B cell (primary cell): ENCODE measurements at regions of chr14 and their contacts with region 1.

Region 1: DNA sequence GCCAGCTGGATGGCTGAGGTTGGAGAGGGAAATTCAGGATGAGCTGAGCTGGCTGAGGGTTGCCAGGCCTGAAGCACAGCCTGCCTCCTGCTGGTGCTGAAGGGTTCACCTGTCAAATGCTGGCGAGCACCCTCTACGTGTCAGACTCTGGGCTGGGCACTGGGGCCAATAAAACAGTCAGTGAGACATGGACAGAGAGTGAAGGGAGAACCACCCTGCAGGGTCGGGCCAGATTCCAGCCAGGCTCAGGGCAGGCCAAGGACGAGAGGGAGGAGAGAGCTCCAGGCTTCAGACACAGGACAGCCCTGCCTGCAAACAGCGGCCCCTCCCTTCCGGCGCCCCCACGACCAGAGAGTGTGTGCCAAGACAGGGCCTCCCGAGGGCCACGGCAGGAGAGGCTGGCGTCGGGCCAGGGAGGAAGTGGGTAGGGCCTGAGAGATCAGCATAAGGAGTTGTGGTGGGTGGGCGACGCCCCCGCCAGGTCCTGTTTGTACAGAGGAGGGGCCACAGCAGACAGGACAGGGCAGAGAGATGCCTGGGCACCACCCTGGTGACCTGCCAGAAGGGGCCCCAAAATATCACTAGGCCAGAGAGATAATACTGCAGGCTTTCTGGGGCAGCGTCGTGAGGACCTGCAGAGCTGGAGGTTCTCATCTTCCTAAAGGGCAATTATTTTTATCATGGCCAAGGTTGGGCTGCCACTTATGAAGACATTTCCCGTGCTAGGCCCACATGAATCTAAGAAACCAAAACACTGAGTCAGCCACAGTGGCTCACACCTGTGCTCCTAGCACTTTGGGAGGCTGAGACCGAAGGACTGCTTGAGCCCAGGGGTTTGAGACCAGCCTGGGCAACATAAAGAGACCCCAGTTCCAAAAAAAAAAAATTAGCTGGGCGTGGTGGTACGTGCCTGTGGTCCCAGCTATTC is 73.1 kb upstream of the GPR68 start:
- DNase-seq: peak; percentile 68
- ATAC-seq: peak; percentile 41
- H3K4me3 ChIP-seq: peak overlapping the region in 2 of 5 experiments; percentile 25 to 37
- H3K4me3 Mint-ChIP-seq: peak overlapping the region; percentile 87
- H3K27ac ChIP-seq: peak overlapping the region; percentile 87 to 92
- H3K27ac Mint-ChIP-seq: peak overlapping the region; percentile 95
- H3K4me1 ChIP-seq: peaks cover 64 to 79% of the 10 kb centered on the region in 2 donors
- H3K4me1 Mint-ChIP-seq: peaks cover 69% of the 10 kb centered on the region
- H3K27me3 ChIP-seq: no peaks in the 10 kb centered on the region
- H3K27me3 Mint-ChIP-seq: no peaks in the 10 kb centered on the region
- CTCF ChIP-seq: no peak

Region 2: GRCh38 chr14:91009501-91010152 is 308.0 kb before region 1 on chr14:
- CTCF ChIA-PET with region 1: no interaction called
- POLR2A ChIA-PET with region 1: no interaction called
- intact Hi-C with region 1: loop called (anchors 10 kb)
- DNase-seq: peak; percentile 90
- ATAC-seq: peak; percentile 90
- H3K4me3 ChIP-seq: peak overlapping the region in 3 of 5 experiments; percentile 12 to 49 (median 21)
- H3K4me3 Mint-ChIP-seq: peak overlapping the region; percentile 75
- H3K27ac ChIP-seq: peak overlapping the region; percentile 73 to 90
- H3K27ac Mint-ChIP-seq: peak overlapping the region; percentile 92
- H3K4me1 ChIP-seq: peaks cover 61 to 69% of the 10 kb centered on the region in 2 donors
- H3K4me1 Mint-ChIP-seq: peaks cover 52% of the 10 kb centered on the region
- H3K27me3 ChIP-seq: no peaks in the 10 kb centered on the region
- H3K27me3 Mint-ChIP-seq: no peaks in the 10 kb centered on the region
- CTCF ChIP-seq: no peak

Region 3: GRCh38 chr14:91244501-91244901 is 73.1 kb before region 1 on chr14 and contains the start of gene GPR68:
- CTCF ChIA-PET with region 1: interaction called, 3 read pairs
- POLR2A ChIA-PET with region 1: no interaction called
- intact Hi-C with region 1: loop called (anchors 2 kb)
- DNase-seq: no peak
- ATAC-seq: no peak
- H3K4me3 ChIP-seq: peak within 1 kb of the TSS in 2 of 5 experiments; percentile 30 to 37
- H3K4me3 Mint-ChIP-seq: peak within 1 kb of the TSS; percentile 75
- H3K27ac ChIP-seq: peak within 1 kb of the TSS; percentile 57 to 79
- H3K27ac Mint-ChIP-seq: peak within 1 kb of the TSS; percentile 91
- H3K4me1 ChIP-seq: peaks cover 46 to 55% of the 10 kb centered on the region in 2 donors
- H3K4me1 Mint-ChIP-seq: peaks cover 62% of the 10 kb centered on the region
- H3K27me3 ChIP-seq: no peaks in the 10 kb centered on the region
- H3K27me3 Mint-ChIP-seq: no peaks in the 10 kb centered on the region
- CTCF ChIP-seq: no peak
- total RNA-seq, gene GPR68: 0.34 and 0.53 TPM in 2 replicates

Region 4: GRCh38 chr14:91367173-91368171 is 49.8 kb after region 1 on chr14:
- CTCF ChIA-PET with region 1: interaction called, 4 read pairs
- POLR2A ChIA-PET with region 1: interaction called, 10 read pairs
- intact Hi-C with region 1: no loop called
- DNase-seq: peak; percentile 97
- ATAC-seq: peak; percentile 77
- H3K4me3 ChIP-seq: peak overlapping the region in 1 of 5 experiments; percentile 13
- H3K4me3 Mint-ChIP-seq: peak overlapping the region; percentile 84
- H3K27ac ChIP-seq: peak overlapping the region; percentile 88 to 98
- H3K27ac Mint-ChIP-seq: peak overlapping the region; percentile 98
- H3K4me1 ChIP-seq: peaks cover 78 to 94% of the 10 kb centered on the region in 2 donors
- H3K4me1 Mint-ChIP-seq: peaks cover 89% of the 10 kb centered on the region
- H3K27me3 ChIP-seq: no peaks in the 10 kb centered on the region
- H3K27me3 Mint-ChIP-seq: no peaks in the 10 kb centered on the region
- CTCF ChIP-seq: no peak

Region 5: DNA sequence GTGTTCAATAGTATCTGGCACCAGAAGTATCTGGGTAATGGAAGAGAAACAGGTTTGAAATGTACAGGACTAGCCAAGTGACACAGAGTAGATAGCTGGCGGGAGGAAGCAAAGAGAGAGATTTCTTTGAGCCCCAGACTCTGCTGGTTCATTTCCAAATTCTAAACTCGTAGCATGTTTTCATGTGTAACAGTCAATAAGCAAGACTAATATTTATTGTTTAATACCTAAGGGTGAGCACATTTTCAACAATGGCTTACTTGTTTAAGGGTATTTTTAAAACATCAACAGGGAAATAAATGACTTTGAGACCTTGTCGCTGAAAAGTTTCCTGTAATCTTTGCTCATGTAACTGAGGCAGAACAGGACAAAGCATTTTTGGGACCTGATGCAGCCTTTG is 111.7 kb after region 1 on chr14:
- CTCF ChIA-PET with region 1: interaction called, 289 read pairs
- POLR2A ChIA-PET with region 1: no interaction called
- intact Hi-C with region 1: no loop called
- DNase-seq: no peak
- ATAC-seq: no peak
- H3K4me3 ChIP-seq: no peak overlapping the region
- H3K4me3 Mint-ChIP-seq: no peak overlapping the region
- H3K27ac ChIP-seq: no peak overlapping the region
- H3K27ac Mint-ChIP-seq: no peak overlapping the region
- H3K4me1 ChIP-seq: peaks cover 0 to 5% of the 10 kb centered on the region in 2 donors
- H3K4me1 Mint-ChIP-seq: peaks cover 18% of the 10 kb centered on the region
- H3K27me3 ChIP-seq: no peaks in the 10 kb centered on the region
- H3K27me3 Mint-ChIP-seq: no peaks in the 10 kb centered on the region
- CTCF ChIP-seq: no peak

Region 6: DNA sequence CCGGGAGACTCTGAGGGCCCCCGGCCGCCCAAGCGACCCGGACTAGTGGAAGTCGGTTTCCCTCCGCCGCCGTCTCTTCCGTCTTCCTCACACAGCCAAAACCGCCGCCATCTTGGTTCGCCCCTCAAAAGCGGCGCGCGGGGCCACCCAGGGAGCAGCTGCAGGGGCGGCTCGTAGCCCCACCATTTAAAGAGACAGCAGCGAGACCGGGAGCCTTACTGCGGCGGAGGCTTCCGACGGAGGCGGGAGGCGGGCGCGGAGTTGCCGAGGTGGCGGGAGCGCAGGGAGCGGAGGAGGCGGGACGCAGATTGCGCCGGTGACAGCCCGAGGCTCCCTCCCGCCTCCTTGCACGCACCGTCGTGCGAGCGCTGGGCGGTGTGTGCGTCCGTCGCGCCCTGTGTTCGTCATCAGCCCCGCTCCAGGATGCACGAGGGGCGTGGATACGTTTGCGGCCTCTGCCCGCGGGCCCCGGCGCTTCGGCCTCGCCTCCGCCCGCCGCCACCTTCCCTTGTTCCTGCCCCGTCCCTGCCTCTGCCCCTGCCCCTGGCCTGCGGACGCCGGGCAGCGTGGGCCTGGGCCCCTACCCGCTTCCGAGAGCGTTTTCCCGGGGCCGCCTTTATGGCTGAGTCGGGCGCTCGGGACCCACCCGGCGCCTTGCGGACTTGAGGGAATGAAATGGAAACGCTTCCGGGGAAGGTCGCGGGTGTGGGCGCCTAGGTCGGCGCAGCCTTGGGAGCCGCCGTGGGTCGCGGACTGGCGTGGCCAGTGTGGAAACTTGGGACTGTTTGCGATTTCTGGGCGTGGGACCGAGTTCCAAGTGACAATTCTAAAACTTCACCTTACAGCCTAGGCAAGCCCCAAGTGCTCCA is 192.8 kb after region 1 on chr14 and contains the start of gene PPP4R3A:
- CTCF ChIA-PET with region 1: interaction called, 3 read pairs
- POLR2A ChIA-PET with region 1: interaction called, 3 read pairs
- intact Hi-C with region 1: loop called (anchors 2 kb)
- DNase-seq: peak; percentile 97
- ATAC-seq: peak; percentile 87
- H3K4me3 ChIP-seq: peak within 1 kb of the TSS; percentile 72 to 99 (median 84)
- H3K4me3 Mint-ChIP-seq: peak within 1 kb of the TSS; percentile 99
- H3K27ac ChIP-seq: peak within 1 kb of the TSS; percentile 97 to 100
- H3K27ac Mint-ChIP-seq: peak within 1 kb of the TSS; percentile 100
- H3K4me1 ChIP-seq: peaks cover 32% of the 10 kb centered on the region in 2 donors
- H3K4me1 Mint-ChIP-seq: peaks cover 37% of the 10 kb centered on the region
- H3K27me3 ChIP-seq: no peaks in the 10 kb centered on the region
- H3K27me3 Mint-ChIP-seq: no peaks in the 10 kb centered on the region
- CTCF ChIP-seq: no peak
- total RNA-seq, gene PPP4R3A: 184 and 189 TPM in 2 replicates

Region 7: DNA sequence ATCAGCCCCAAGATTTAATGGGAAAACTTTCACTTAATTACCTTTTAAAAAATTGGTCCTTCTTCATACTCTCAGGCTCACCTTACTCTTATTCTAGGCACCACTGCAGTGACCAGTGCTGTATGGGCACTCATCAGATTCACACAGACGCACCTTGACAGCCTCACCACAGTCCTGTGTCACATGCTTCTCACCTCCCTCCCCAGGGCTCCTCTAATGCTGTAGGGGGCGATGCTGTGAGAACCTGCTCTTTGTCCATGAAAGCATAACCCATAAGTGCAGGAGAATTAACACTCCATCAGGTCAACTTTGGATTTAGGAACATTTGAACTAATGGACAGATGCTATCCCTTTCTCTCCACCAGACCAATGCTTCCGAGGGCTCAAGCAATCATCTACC is 206.3 kb after region 1 on chr14:
- CTCF ChIA-PET with region 1: no interaction called
- POLR2A ChIA-PET with region 1: no interaction called
- intact Hi-C with region 1: no loop called
- DNase-seq: no peak
- ATAC-seq: no peak
- H3K4me3 ChIP-seq: no peak overlapping the region
- H3K4me3 Mint-ChIP-seq: no peak overlapping the region
- H3K27ac ChIP-seq: no peak overlapping the region
- H3K27ac Mint-ChIP-seq: no peak overlapping the region
- H3K4me1 ChIP-seq: no peaks in the 10 kb centered on the region
- H3K4me1 Mint-ChIP-seq: no peaks in the 10 kb centered on the region
- H3K27me3 ChIP-seq: no peaks in the 10 kb centered on the region
- H3K27me3 Mint-ChIP-seq: peaks cover 5% of the 10 kb centered on the region
- CTCF ChIP-seq: no peak